ENCODE measurements at regions of chr14 and their contacts with region 1.

Region 1: GRCh38 chr14:53751650-53752049 is 205.0 kb downstream of the BMP4 start:
- DNase-seq: no peak

Region 2: DNA sequence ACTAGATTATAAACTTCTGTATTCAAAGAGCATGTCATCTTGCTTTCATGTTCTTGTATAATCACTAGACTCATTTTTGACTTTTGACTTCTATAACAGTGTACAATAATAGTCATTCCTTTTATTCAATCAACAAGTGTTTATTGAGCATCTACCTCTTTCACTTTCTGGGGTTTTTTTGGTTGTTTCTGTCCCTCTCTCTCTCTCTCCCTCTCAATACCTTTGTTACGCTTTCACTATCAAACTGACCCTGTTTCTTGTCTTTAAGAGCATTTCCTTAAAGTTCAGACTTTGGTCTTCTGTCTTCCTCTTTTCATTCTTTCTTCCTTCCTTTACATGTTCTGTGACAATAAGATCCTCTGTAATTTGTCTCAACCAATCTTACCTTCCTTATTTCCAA is 1149.5 kb before region 1 on chr14:
- intact Hi-C with region 1: loop called in 1 of 2 experiments (anchors 5 kb)
- DNase-seq: no peak

Measured in posterior vena cava (tissue), 2 donors.